ENCODE measurements at regions of chr2 and their contacts with region 1.

Region 1: DNA sequence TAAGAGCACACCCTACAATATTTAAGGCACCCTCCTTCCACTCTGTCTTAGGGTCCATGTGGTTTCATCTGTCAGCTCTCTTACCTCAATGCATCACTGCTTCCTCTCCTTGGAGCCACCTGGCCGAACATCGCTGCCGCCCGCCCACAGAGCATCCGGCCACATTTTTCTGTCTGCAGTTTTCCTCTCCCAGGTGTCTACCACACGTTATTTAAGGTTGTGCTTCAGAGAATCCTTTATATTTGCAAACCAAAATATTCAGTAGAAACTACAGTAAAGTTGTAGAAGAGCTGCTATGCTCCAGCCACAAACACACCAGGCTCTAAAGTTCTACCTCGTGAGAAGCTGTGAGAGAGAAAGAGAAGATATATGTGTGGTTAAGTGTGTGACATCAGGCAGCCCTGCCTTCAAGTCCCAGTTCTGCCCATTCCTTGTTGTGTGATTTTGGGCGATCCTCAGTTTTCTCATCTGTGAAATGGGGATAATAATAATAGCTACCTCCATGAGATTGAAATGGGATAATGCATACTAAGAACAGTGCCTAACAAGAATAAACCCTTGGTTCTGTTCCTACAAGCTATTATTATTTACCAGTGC is 4.9 kb upstream of the STK17B start:
- DNase-seq: peak; percentile 69 to 95
- ATAC-seq: peak; percentile 38 to 58 (median 54)
- H3K4me3 ChIP-seq: peak overlapping the region; percentile 0
- H3K4me3 Mint-ChIP-seq: peak overlapping the region; percentile 79
- H3K27ac ChIP-seq: peak overlapping the region; percentile 83
- H3K27ac Mint-ChIP-seq: peak overlapping the region; percentile 86 to 95
- H3K4me1 ChIP-seq: peaks cover 50% of the 10 kb centered on the region
- H3K4me1 Mint-ChIP-seq: peaks cover 55 to 57% of the 10 kb centered on the region in 2 donors
- H3K27me3 ChIP-seq: no peaks in the 10 kb centered on the region
- H3K27me3 Mint-ChIP-seq: no peaks in the 10 kb centered on the region
- CTCF ChIP-seq: no peak

Region 2: DNA sequence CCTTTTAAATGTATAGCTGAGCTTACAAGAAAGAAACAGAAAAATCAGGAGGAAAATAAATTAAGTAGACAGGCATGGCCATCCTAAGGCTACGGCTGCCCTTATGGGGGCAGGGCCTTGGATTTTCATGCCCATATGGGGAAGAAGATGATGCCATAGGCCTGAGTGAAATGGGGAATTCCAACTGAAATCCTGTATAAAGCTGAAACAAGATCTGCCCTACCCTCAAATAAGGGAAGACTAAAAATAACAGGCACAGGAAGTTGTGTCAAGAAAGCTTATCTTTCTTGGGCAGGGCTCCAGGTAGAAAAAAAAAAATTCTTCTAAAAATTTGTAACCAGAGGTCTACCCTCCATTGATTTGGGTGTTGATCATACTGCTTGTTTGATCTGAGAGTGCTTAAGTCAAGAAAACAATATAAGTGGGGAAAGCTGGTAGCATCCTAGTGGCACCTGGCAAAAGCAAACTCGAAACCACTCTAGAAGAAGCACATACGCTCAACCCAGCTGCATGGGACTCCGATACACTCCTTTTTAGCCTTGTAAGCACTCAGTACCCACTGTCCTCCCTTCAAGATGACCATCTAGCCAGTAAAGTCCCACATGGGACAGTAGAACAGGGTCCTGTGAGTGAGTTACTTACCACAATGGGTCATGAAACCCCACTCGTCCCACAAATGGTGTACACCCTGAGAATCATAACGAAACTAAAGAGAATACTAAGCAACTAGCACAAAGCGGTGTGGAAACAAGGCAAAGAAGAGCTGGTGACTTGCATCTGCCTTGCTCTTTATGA is 129.9 kb before region 1 on chr2:
- intact Hi-C with region 1: no loop called
- DNase-seq: no peak
- ATAC-seq: no peak
- H3K4me3 ChIP-seq: no peak overlapping the region
- H3K4me3 Mint-ChIP-seq: no peak overlapping the region
- H3K27ac ChIP-seq: no peak overlapping the region
- H3K27ac Mint-ChIP-seq: no peak overlapping the region
- H3K4me1 ChIP-seq: no peaks in the 10 kb centered on the region
- H3K4me1 Mint-ChIP-seq: no peaks in the 10 kb centered on the region
- H3K27me3 ChIP-seq: no peaks in the 10 kb centered on the region
- H3K27me3 Mint-ChIP-seq: peaks cover 10 to 17% of the 10 kb centered on the region in 2 donors
- CTCF ChIP-seq: no peak

Region 3: GRCh38 chr2:196160101-196160500 is 16.1 kb before region 1 on chr2:
- intact Hi-C with region 1: loop called (anchors 2 kb)
- DNase-seq: peak in 1 of 2 donors; percentile 92
- ATAC-seq: peak; percentile 69 to 84 (median 73)
- H3K4me3 ChIP-seq: peak overlapping the region; percentile 17
- H3K4me3 Mint-ChIP-seq: peak overlapping the region; percentile 75
- H3K27ac ChIP-seq: peak overlapping the region; percentile 88
- H3K27ac Mint-ChIP-seq: peak overlapping the region; percentile 86 to 95
- H3K4me1 ChIP-seq: peaks cover 35% of the 10 kb centered on the region
- H3K4me1 Mint-ChIP-seq: peaks cover 56 to 57% of the 10 kb centered on the region in 2 donors
- H3K27me3 ChIP-seq: no peaks in the 10 kb centered on the region
- H3K27me3 Mint-ChIP-seq: no peaks in the 10 kb centered on the region
- CTCF ChIP-seq: no peak

Region 4: DNA sequence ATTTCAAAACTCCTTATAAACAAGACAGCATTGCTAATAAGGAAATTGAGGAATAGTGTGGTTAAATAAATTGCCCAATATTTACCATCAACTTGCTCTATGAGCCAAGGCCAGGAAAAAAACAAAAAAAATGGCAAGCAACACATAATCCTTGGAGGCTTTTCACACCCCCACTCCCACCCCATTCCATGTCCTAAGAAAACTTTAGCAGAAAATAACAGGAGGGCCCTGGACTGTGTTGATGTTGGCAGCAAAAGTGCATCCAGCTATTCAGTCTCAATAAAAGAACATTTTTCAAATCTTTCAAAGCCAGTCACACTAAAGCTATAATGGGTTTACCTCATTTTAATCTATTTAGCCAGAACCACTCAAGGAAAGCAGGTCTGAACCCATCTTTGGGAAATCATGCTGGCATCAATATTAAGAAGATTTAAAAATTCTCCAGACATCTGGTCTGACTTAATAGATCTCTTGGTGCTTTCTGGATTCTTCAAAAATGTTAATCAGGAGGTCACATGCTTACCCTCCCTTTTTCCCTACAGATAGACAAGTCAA is 29.7 kb after region 1 on chr2:
- intact Hi-C with region 1: loop called (anchors 1 kb)
- DNase-seq: no peak
- ATAC-seq: no peak
- H3K4me3 ChIP-seq: no peak overlapping the region
- H3K4me3 Mint-ChIP-seq: no peak overlapping the region
- H3K27ac ChIP-seq: no peak overlapping the region
- H3K27ac Mint-ChIP-seq: no peak overlapping the region
- H3K4me1 ChIP-seq: peaks cover 11% of the 10 kb centered on the region
- H3K4me1 Mint-ChIP-seq: peaks cover 14 to 18% of the 10 kb centered on the region in 2 donors
- H3K27me3 ChIP-seq: no peaks in the 10 kb centered on the region
- H3K27me3 Mint-ChIP-seq: no peaks in the 10 kb centered on the region
- CTCF ChIP-seq: no peak

Measured in natural killer cell (primary cell).